Cardiac septum (tissue), 1 donor: ENCODE measurements at regions of chr20 and their contacts with region 1.

Region 1: DNA sequence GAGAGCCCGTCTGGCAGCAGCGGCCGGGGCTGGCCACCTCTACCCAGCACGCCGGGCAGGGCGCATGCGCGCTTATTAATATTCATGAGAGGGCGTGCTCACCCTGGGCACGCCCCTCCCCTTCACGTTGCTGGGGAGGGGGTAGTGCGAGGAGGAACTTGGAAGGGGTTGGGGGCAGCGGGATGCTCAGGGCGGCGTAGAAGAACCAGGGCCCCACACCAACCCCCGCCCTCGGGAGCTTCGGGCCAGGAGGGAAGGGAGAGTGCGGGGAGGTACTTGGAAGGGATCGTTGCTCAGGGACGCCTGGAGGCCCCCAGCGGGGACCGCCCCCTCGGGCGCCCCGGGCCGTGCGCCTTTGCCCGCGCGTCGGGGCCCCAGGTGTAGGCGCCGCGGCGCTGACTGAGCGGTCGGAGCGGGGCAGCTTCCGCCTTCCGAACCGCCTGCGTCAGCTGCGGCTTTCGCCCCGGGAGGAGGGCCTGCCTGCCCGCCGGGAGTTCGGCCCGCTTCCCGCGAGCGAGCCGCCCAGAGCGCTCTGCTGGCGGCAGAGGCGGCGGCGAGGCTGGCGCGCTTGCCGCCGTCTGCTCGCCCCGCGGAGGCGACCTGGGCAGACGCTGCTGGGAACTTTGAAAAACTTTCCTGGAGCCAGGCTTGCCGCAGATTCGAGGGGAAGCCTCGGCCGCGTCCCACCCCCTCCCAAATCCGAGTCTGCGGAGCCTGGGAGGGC is at the start of gene JAG1:
- DNase-seq: peak; percentile 99
- total RNA-seq, gene JAG1: 42.1 TPM

Region 2: DNA sequence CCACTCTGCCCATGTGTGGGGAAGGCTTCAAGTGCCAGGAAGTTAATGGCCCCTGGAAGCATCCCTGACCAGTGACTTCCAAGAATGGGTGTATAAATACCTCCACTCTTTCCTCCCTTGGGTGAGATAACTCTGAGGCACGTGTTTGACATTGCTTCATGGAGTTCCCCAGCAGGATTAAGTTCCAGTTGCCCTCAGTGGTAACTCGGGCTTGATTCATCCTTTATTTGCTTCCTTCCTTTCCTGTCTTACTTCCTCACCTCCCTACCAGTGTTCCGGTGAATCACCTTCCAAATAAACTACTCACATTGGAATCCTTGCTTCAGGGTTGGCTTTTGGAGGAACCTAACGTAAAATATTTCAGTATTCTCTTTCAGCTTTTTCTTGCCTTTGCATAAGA is 84.3 kb after region 1 on chr20:
- intact Hi-C with region 1: loop called (anchors 10 kb)
- DNase-seq: no peak

Region 3: DNA sequence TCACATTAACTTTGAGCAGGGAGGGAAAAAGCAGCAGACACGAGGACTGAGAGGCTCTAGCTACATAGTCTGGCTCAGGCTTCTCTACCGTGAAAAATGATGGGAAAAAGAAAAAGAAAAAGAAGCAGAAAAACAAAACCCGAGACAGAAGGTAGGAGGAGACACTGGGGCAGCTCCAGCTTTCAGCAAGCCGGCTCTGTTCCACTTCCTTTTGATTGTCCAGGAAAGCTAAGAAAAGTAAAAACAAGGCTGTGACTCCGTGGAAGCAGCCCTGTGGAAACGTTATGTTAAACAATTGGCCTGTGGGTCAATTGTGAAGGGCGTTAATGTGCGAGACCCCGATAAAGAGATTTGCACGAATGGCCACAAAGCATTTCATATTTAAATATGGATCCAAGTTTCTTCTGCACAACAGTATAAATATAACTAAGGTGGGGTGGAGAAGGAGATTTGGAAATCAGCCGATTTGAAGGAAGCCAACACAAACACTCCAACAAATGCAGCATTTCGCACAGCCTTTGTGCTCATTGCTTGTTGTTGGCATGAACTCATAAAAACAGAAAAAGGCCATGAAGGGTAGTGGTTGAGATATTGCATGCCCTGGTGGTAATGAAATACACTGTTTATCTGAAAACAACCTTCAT is 236.5 kb after region 1 on chr20:
- intact Hi-C with region 1: loop called (anchors 5 kb)
- DNase-seq: no peak

Region 4: DNA sequence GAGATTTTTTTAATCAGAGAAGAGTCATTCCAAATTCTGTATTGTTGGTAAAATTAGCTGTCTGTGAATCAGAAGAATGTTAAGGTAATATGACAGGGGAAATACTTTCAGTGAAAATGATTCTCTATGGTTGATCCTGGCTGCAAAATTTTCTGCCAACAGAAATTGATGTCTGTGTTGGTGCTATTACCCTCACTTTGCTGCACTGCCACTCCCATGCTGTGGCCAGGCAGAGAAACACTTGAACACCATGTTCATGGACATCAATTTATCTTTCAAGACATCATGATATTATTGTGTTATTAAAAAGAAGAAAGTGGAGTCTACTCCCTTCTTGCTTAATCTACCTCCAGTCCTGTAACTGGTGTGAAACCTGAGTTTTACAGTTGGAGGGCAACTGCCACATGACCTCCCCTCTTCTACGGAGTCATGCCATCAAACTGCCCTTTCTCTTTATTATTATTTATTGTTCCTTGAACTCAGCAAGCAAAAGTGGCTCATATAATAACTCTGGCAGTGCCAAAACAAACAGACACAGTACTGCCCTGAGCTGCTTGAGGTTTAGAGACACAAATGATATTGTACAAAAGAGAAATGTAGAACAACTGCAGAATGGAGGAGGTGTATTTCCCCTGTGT is 287.6 kb after region 1 on chr20:
- intact Hi-C with region 1: no loop called
- DNase-seq: no peak

Region 5: DNA sequence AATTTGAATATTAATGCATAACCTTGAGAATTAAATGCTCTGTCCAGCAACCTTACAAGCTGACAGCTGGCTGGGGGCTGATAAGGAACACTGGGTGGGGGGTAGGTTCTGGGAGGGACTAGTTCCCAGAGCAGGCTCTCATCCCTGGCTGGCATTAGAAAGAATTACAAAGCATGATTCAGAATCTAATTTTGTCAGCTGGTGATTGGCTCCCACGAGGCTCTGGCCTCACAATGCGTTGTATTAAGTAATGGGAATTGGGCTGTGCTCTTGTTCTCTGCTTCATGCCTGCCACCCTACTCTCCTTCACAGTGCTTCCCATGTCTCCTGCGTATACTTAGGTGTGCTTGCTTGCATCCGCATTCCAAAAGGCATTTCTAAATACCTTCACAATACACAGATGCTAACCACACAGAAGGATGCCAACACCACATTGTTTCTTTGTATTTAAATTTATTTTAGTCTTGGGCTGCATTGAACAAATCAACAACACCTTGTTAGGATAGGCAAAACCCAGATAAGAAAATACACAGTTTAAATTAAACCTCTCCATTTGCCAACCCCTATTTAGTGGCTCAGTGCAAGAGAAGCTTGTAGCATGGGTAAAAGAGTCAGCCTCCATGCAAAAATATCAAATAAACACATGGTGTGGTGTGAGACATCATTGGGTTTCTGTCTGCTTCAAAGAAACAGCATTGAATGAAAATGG is 434.1 kb after region 1 on chr20:
- intact Hi-C with region 1: loop called (anchors 2 kb)
- DNase-seq: peak; percentile 75

Region 6: DNA sequence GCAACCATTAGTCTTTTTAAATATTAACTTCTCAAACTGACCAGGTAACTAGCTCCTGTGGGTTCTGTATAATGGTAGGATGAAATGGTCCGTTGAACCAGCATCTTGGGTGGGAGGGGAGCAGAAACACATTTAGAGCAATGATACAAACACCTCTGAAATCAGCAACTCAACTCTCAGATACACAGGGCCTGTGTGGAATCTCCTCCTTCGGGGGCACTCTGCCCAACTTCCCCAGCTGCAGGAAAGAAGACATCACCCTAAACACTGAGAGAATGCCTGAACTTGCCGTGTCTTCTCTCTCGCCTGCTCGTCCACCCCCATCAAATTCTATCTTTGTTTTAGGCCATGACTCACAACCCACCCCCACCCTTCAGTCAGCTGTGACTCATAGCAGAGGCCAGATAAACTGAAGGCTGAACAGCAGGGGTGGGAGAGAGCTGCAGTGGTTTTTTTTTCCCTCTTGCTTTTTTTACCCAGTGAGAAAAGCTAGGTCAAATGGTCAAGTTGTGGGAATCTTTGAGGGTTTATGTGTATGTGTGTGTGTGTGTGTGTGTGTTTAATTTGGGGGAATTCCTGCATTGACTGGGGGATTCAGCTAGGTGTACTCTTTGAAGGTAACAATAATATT is 593.1 kb after region 1 on chr20:
- intact Hi-C with region 1: loop called (anchors 5 kb)
- DNase-seq: peak; percentile 76